ENCODE measurements at regions of chr16 and their contacts with region 1.

Region 1: GRCh38 chr16:72689851-72690250 is 358.1 kb downstream of the ZFHX3 start:
- DNase-seq: no peak
- ATAC-seq: no peak
- H3K4me3 Mint-ChIP-seq: no peak overlapping the region
- H3K27ac Mint-ChIP-seq: no peak overlapping the region
- H3K4me1 Mint-ChIP-seq: no peaks in the 10 kb centered on the region
- H3K27me3 Mint-ChIP-seq: no peaks in the 10 kb centered on the region

Region 2: DNA sequence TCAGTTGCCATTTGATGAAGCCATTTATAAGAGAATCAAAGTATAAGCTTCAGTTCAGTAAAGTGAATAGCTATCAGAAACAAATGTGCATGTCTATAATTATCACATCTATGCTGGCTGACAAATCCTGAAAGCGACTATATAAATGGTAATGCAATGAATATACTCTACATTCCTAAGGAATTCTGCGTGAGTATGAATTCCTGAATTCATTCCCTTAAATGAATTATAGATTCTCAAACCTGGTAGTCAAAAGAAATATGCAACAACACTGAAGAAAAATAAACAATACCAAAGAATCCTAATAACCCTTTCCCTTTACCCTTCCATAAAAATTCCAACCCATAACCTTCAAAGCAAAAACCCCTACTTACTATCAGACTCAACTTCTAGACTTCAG is 101.3 kb before region 1 on chr16:
- CTCF ChIA-PET with region 1: no interaction called
- POLR2A ChIA-PET with region 1: no interaction called
- intact Hi-C with region 1: loop called in 1 of 2 experiments (anchors 2 kb)
- DNase-seq: no peak
- ATAC-seq: no peak
- H3K4me3 Mint-ChIP-seq: no peak overlapping the region
- H3K27ac Mint-ChIP-seq: no peak overlapping the region
- H3K4me1 Mint-ChIP-seq: no peaks in the 10 kb centered on the region
- H3K27me3 Mint-ChIP-seq: no peaks in the 10 kb centered on the region

Measured in activated CD4-positive, alpha-beta T cell treated with anti-CD3 and anti-CD28 coated beads for 36 hours (primary cell).